BJ (cell line): ENCODE measurements at regions of chr19 and their contacts with region 1.

Region 1: GRCh38 chr19:18450931-18451845 is 13.3 kb upstream of the ISYNA1 start:
- DNase-seq: no peak
- H3K4me3 ChIP-seq: no peak overlapping the region
- H3K27me3 ChIP-seq: no peaks in the 10 kb centered on the region
- CTCF ChIP-seq: peak; percentile 98

Region 2: GRCh38 chr19:18373892-18374629 is 77.1 kb before region 1 on chr19:
- CTCF ChIA-PET with region 1: no interaction called
- POLR2A ChIA-PET with region 1: no interaction called
- DNase-seq: peak; percentile 92
- H3K4me3 ChIP-seq: no peak overlapping the region
- H3K27me3 ChIP-seq: no peaks in the 10 kb centered on the region
- CTCF ChIP-seq: no peak

Region 3: GRCh38 chr19:18393836-18394235 is 57.4 kb before region 1 on chr19:
- CTCF ChIA-PET with region 1: no interaction called
- POLR2A ChIA-PET with region 1: no interaction called
- DNase-seq: no peak
- H3K4me3 ChIP-seq: no peak overlapping the region
- H3K27me3 ChIP-seq: no peaks in the 10 kb centered on the region
- CTCF ChIP-seq: no peak

Region 4: GRCh38 chr19:18440415-18440877 is 10.7 kb before region 1 on chr19:
- CTCF ChIA-PET with region 1: interaction called, 19 read pairs
- POLR2A ChIA-PET with region 1: no interaction called
- DNase-seq: no peak
- H3K4me3 ChIP-seq: no peak overlapping the region
- H3K27me3 ChIP-seq: no peaks in the 10 kb centered on the region
- CTCF ChIP-seq: peak; percentile 33; the same call in 1 of the 2 replicates

Region 5: GRCh38 chr19:18469069-18469846 is 18.1 kb after region 1 on chr19:
- CTCF ChIA-PET with region 1: interaction called, 16 read pairs
- POLR2A ChIA-PET with region 1: no interaction called
- DNase-seq: no peak
- H3K4me3 ChIP-seq: no peak overlapping the region
- H3K27me3 ChIP-seq: no peaks in the 10 kb centered on the region
- CTCF ChIP-seq: peak; percentile 85

Region 6: DNA sequence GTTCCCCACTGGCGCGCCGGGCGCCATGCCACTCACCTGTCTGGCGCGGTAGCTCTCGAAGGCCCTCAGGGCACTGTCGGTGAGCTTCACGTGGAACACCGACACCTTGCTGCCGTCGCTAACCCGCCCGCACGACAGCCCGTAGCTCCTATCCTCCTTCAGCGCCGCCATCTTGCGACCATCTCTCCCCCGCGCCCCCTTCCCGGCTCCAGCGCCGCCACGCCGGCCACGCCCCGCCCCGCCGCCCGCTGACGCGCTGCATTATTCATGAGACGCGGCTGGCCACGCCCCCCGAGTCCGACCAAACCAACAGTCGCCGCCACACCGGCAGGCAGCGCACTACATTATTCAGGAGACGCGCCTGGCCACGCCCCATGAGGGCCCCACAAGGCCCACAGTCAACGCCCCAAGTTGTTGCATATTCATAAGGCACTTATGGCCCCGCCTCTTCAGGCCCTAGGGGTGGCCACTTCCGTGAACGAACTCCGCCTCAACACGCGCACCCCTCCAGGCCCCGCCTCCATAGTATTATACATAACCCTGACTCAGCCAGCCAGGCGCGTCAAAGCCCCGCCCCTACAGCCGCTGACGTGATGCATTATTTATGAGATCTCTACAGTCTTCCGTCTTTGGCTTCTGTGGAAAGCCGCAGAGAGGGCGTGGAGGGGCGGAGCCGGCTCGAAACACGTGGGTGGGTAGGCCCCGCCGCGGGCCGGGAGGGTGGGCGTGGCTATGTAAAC is 70.9 kb after region 1 on chr19 and contains the start of gene ELL:
- CTCF ChIA-PET with region 1: interaction called, 12 read pairs
- POLR2A ChIA-PET with region 1: no interaction called
- DNase-seq: peak; percentile 100
- H3K4me3 ChIP-seq: peak within 1 kb of the TSS; percentile 100
- H3K27me3 ChIP-seq: no peaks in the 10 kb centered on the region
- CTCF ChIP-seq: peak; percentile 36
- polyA plus RNA-seq, gene ELL: 4.4 and 10.2 TPM in 2 replicates

Region 7: DNA sequence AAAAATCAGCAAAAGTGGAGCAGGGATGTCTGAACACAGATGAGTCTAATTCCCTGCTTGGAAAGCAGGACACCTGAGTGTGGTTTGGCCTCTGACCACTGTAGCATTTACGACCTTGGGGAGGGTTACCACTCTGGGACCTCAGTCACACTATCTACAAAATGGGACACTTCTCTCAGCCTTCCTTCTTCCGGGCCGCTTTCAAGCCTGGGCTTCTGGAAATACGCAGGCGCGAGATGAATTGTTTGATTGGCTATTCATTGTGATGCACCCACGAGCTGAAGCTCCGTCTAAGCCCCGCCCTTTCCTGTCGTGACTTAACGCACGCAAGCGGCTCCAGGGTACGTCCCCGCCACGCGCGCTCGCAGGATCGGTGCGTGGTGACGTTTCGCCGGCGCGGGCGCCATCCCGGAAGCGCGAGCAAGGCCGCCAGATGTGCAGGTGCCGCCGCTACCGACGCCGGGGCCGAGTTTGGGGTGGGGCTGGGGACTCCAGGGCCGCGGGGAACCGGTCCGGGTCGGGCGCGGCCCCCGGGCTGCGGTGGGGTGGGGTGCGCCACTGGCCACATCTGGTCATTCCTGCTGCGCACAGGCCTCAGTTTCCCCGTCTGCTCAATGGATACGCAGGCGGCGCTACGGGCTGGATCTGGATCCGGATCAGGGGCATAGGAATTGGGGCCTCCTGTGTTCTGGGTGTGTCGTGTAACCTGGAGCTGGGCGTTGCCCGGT is 106.5 kb after region 1 on chr19 and contains the start of gene KXD1:
- CTCF ChIA-PET with region 1: interaction called, 10 read pairs
- POLR2A ChIA-PET with region 1: no interaction called
- DNase-seq: peak; percentile 97
- H3K4me3 ChIP-seq: peak within 1 kb of the TSS; percentile 93
- H3K27me3 ChIP-seq: no peaks in the 10 kb centered on the region
- CTCF ChIP-seq: no peak
- polyA plus RNA-seq, gene KXD1: 100 and 163 TPM in 2 replicates

Region 8: DNA sequence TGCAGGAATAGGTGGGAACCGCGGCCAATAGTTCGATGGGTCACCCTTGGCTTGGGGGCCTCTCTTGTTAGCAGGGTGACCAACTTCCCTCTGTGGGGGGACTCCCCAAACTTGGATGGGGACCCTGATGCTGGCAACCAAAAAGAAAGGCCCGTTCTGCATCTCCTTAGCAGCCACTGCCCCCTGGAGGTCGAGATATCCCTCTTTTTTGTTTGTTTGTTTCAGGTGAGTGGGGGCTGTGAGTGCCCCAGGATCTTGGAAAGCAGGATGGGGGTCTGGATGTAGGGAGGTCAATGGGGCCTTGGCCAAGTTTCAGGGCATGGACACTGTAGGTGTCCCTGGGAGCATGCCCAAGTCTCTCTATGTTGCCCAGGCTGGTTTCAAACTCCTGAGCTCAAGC is 224.6 kb after region 1 on chr19:
- CTCF ChIA-PET with region 1: interaction called, 11 read pairs
- POLR2A ChIA-PET with region 1: no interaction called
- DNase-seq: no peak
- H3K4me3 ChIP-seq: no peak overlapping the region
- H3K27me3 ChIP-seq: no peaks in the 10 kb centered on the region
- CTCF ChIP-seq: peak; percentile 51

Region 9: DNA sequence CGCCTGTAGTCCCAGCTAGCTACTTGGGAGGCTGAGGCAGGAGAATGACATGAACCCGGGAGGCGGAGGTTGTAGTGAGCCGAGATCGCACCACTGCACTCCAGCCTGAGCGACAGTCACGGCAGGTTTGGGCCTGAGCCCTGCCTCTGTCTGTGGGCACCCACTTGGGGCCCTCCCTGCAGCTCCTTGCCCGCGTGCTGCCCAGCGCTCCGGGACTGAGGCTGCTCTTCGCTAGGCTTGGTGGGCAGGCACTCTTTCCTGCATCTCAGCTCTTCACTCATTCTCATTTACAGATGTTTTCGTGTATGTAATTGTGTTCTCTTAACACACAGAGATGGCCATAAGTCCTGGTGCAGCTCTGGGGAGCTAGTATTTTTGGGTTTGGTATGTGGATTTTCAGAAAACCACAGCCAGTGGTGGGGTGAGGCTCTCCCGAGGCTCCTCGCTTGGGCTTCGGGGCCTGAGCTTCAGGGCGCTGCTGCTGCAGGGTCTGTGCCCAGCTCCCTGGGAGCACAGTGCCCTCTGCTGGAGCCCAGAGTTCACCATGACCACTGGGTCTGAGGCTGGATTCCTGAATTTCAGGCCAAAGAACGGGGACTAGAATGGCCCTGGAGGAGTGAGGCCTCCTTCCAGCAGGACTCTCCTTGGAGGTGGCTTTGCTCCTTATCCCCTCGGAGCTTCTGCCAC is 395.8 kb after region 1 on chr19:
- CTCF ChIA-PET with region 1: interaction called, 31 read pairs
- POLR2A ChIA-PET with region 1: no interaction called
- DNase-seq: no peak
- H3K4me3 ChIP-seq: no peak overlapping the region
- H3K27me3 ChIP-seq: no peaks in the 10 kb centered on the region
- CTCF ChIP-seq: peak; percentile 95